Panc1 (cell line): ENCODE measurements at regions of chr10 and their contacts with region 1.

Region 1: GRCh38 chr10:123241391-123242141 is 87.4 kb downstream of the BUB3 start:
- DNase-seq: no peak
- ATAC-seq: no peak
- H3K4me3 ChIP-seq: no peak overlapping the region
- H3K27ac ChIP-seq: no peak overlapping the region
- H3K4me1 ChIP-seq: no peaks in the 10 kb centered on the region
- H3K27me3 ChIP-seq: no peaks in the 10 kb centered on the region
- CTCF ChIP-seq: no peak

Region 2: GRCh38 chr10:123213192-123213591 is 28.4 kb before region 1 on chr10:
- CTCF ChIA-PET with region 1: no interaction called
- POLR2A ChIA-PET with region 1: interaction called, 11 read pairs
- in situ Hi-C with region 1: no loop called
- intact Hi-C with region 1: no loop called
- DNase-seq: no peak
- ATAC-seq: no peak
- H3K4me3 ChIP-seq: no peak overlapping the region
- H3K27ac ChIP-seq: no peak overlapping the region
- H3K4me1 ChIP-seq: no peaks in the 10 kb centered on the region
- H3K27me3 ChIP-seq: no peaks in the 10 kb centered on the region
- CTCF ChIP-seq: no peak

Region 3: GRCh38 chr10:123427392-123427791 is 185.8 kb after region 1 on chr10:
- CTCF ChIA-PET with region 1: no interaction called
- POLR2A ChIA-PET with region 1: no interaction called
- in situ Hi-C with region 1: no loop called
- intact Hi-C with region 1: no loop called
- DNase-seq: no peak
- ATAC-seq: no peak
- H3K4me3 ChIP-seq: no peak overlapping the region
- H3K27ac ChIP-seq: no peak overlapping the region
- H3K4me1 ChIP-seq: no peaks in the 10 kb centered on the region
- H3K27me3 ChIP-seq: peaks cover 54% of the 10 kb centered on the region
- CTCF ChIP-seq: no peak